Sigmoid colon (tissue), 7 donors: ENCODE measurements at regions of chr1 and their contacts with region 1.

Region 1: DNA sequence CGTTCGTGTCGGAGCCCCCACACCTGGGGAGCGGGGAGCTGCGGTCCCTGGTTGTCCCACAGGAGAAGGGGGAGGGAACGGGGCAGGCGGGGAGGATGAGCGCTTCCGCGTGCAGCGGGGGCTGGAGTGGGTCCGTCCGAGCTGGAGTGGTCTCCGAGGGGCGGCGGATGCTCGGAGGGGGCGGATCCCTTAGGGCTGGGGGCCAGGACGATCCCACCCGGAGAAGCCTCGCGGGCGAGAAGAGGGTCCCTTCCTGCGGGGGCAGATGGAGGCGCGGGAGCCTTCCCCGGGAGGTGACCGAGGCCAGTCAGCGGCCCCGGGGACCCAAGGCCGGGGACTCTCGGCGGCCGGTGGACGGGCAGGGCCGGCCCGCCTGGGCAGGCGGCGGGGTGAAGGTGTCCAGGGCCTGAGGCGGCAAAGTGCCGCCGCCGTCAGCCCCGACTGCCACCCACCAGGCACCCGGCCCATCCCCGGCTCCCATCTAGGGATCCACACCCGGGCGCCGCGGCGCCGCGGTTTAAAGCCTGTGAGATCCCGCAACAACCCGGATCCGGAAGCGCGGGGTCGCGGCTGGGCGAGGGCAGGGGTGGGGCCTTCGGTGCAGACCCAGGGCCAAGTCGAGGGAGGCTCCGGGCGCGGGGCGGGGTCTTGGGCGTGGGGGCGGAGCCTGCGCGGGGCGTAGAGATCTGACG is 5.3 kb upstream of the CCDC27 start:
- DNase-seq: peak; percentile 93
- H3K4me3 ChIP-seq: peak overlapping the region; percentile 57 to 91 (median 74)
- H3K27ac ChIP-seq: peak overlapping the region; percentile 74 to 87 (median 79)
- H3K4me1 ChIP-seq: peaks cover 0 to 34% (median 24%) of the 10 kb centered on the region in 4 donors
- H3K27me3 ChIP-seq: peaks cover 0 to 1% (median 0%) of the 10 kb centered on the region in 3 donors
- CTCF ChIP-seq: no peak
- EP300 ChIP-seq: no peak
- POLR2A ChIP-seq: peak in 1 of 2 donors; percentile 51

Region 2: GRCh38 chr1:3702990-3703728 is 43.8 kb before region 1 on chr1:
- intact Hi-C with region 1: no loop called
- DNase-seq: no peak
- H3K4me3 ChIP-seq: no peak overlapping the region
- H3K27ac ChIP-seq: no peak overlapping the region
- H3K4me1 ChIP-seq: no peaks in the 10 kb centered on the region
- H3K27me3 ChIP-seq: peaks cover 6 to 61% (median 31%) of the 10 kb centered on the region in 3 donors
- CTCF ChIP-seq: no peak
- EP300 ChIP-seq: no peak
- POLR2A ChIP-seq: no peak

Region 3: GRCh38 chr1:3772027-3772714 is 25.2 kb after region 1 on chr1:
- intact Hi-C with region 1: loop called (anchors 2 kb)
- DNase-seq: peak; percentile 97
- H3K4me3 ChIP-seq: peak overlapping the region; percentile 47 to 86 (median 68)
- H3K27ac ChIP-seq: peak overlapping the region; percentile 68 to 89 (median 84)
- H3K4me1 ChIP-seq: peaks cover 0 to 39% (median 32%) of the 10 kb centered on the region in 4 donors
- H3K27me3 ChIP-seq: no peaks in the 10 kb centered on the region
- CTCF ChIP-seq: no peak
- EP300 ChIP-seq: no peak
- POLR2A ChIP-seq: no peak

Region 4: DNA sequence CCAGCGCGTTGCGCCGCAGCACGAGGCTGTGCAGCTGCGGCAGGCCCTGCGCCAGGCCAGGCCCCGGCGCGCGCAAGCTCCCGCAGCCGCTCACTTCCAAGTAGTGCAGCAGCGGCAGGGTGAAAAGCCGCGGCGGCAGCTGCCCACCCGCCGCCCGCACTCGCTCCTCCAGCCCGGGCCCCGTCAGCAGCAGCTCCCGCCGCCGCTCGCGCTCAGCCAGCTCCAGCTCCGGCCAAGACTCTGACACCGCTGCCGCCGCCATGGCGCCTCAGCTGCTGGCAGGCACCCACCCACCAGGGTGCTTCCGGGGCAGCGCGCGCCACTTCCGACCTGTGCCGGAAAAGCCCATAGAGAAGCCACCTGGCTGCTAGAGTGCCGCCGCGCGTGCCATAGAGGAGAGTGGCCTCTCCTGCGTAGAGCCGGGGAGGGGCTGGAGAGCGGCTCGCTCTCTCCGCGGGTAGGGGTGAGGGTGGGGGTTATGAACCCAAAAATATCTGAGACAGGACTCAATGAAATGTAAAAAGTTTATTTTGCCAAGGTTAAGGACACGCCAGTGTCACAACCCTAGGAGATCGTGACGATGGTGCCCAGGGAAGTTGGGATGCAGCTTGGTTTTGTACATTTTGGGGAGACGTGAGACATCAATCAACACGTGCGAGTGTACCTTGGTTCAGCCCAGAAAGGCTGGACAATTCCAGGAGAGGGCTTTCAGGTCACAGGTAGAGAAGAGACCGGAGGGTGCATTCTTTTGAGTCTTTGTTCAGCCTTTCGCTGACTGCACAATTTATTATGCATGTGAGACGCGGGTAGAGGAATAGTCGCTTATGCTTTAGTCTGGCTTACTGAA is 49.5 kb after region 1 on chr1 and contains the start of gene LRRC47:
- intact Hi-C with region 1: loop called (anchors 5 kb)
- DNase-seq: peak; percentile 97
- H3K4me3 ChIP-seq: peak within 1 kb of the TSS; percentile 75 to 97 (median 88)
- H3K27ac ChIP-seq: peak within 1 kb of the TSS; percentile 70 to 85 (median 78)
- H3K4me1 ChIP-seq: peaks cover 0 to 39% (median 36%) of the 10 kb centered on the region in 4 donors
- H3K27me3 ChIP-seq: no peaks in the 10 kb centered on the region
- CTCF ChIP-seq: no peak
- EP300 ChIP-seq: peak in 1 of 4 donors; percentile 29
- POLR2A ChIP-seq: peak; percentile 35 to 57
- total RNA-seq, gene LRRC47: 26.7 to 36.4 (median 31.2) TPM

Region 5: GRCh38 chr1:3910857-3911845 is 164.2 kb after region 1 on chr1:
- intact Hi-C with region 1: no loop called
- DNase-seq: no peak
- H3K4me3 ChIP-seq: no peak overlapping the region
- H3K27ac ChIP-seq: no peak overlapping the region
- H3K4me1 ChIP-seq: peaks cover 0 to 9% (median 3%) of the 10 kb centered on the region in 4 donors
- H3K27me3 ChIP-seq: peaks cover 5 to 22% (median 14%) of the 10 kb centered on the region in 3 donors
- CTCF ChIP-seq: peak; percentile 28 to 65 (median 61)
- EP300 ChIP-seq: no peak
- POLR2A ChIP-seq: no peak